Breast epithelium (tissue), 4 donors: ENCODE measurements at regions of chr1 and their contacts with region 1.

Region 1: DNA sequence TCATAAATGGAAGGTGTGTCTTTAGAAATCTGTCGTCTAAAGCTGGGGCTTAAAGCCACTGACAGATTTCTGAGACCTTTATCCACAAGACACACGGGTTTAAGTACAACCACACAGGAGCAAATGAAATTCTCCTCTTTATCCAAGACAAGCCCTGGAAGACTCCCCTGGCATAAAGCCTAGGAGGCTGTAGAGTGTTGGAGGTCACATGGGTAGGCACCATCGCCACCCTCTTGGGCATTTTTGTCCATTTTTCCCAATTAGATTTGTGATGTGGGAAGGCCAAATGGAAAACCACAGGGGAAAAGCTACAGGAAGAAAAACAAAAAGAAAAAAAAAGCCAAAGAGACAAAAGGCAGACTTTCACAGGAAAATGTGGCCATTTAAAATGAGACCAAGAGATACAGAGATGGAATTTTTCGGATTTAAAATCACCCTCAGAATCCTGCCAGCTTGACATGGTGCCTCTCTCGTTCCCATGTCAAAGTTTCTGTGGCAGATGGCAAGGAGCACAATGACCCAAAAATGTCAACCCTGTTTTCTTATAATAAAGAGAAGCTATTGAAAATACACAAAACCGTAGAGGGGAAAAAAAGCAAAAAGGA is 91.9 kb downstream of the PLD5 start:
- DNase-seq: no peak
- H3K4me3 ChIP-seq: no peak overlapping the region
- H3K27ac ChIP-seq: no peak overlapping the region
- H3K4me1 ChIP-seq: no peaks in the 10 kb centered on the region
- H3K27me3 ChIP-seq: no peaks in the 10 kb centered on the region
- CTCF ChIP-seq: no peak
- POLR2A ChIP-seq: no peak

Region 2: GRCh38 chr1:241387216-241387615 is 1045.4 kb before region 1 on chr1:
- intact Hi-C with region 1: loop called (anchors 5 kb)
- DNase-seq: no peak
- H3K4me3 ChIP-seq: no peak overlapping the region
- H3K27ac ChIP-seq: no peak overlapping the region
- H3K4me1 ChIP-seq: no peaks in the 10 kb centered on the region
- H3K27me3 ChIP-seq: no peaks in the 10 kb centered on the region
- CTCF ChIP-seq: no peak
- POLR2A ChIP-seq: no peak